Common myeloid progenitor, CD34-positive (primary cell): ENCODE measurements at regions of chr11 and their contacts with region 1.

Region 1: GRCh38 chr11:1694064-1694845 is 2.7 kb upstream of the KRTAP5-6 start:
- DNase-seq: peak; percentile 71 to 82 (median 79)
- H3K4me3 ChIP-seq: peak overlapping the region in 3 of 7 experiments; percentile 57 to 69 (median 63)
- H3K27ac ChIP-seq: no peak overlapping the region
- H3K4me1 ChIP-seq: peaks cover 0 to 27% (median 22%) of the 10 kb centered on the region in 4 experiments
- H3K27me3 ChIP-seq: peaks cover 0 to 3% (median 0%) of the 10 kb centered on the region in 5 experiments

Region 2: DNA sequence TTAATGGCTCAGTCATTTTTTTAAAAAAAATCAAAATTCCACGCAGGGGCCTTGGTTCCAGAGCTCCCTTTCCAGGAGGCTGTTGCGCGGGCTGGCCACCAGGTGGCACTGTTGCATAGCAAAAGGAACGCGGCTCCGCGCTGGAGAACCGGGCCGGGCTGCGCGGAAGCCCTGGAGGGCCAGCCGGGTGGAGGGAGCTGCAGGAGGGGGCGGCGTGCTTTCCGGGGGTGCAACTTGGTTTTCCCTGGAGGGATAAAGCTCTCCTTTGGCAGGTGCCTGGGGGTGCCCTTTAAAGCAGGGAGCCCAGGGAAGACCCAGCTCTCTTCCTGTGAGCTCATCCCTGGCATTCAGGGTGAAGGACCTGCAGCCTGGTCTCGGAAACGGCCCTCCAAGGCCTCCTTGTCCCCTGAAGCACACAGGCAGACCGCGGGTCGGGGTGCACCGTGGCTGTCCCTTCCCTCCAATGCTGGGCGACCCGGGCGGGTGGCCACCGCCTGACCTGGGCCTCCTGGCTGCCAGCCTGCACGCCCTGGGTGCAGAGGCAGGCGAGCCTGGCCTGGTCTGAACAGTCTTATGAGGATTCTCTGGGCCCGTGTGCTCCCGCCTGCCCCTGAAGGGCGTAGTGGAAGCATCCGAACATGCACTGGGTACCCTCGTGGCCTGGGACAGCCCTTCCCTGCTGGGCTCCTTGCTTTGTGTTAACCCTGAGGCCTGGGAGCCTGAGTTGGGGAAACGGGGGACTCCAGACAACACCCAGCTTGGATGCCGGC is 41.3 kb before region 1 on chr11:
- CTCF ChIA-PET with region 1: interaction called, 127 read pairs
- POLR2A ChIA-PET with region 1: interaction called, 4 read pairs
- DNase-seq: peak; percentile 56 to 77 (median 73)
- H3K4me3 ChIP-seq: peak overlapping the region in 1 of 7 experiments; percentile 48
- H3K27ac ChIP-seq: no peak overlapping the region
- H3K4me1 ChIP-seq: peaks cover 2 to 49% (median 41%) of the 10 kb centered on the region in 4 experiments
- H3K27me3 ChIP-seq: peaks cover 0 to 3% (median 0%) of the 10 kb centered on the region in 5 experiments

Region 3: DNA sequence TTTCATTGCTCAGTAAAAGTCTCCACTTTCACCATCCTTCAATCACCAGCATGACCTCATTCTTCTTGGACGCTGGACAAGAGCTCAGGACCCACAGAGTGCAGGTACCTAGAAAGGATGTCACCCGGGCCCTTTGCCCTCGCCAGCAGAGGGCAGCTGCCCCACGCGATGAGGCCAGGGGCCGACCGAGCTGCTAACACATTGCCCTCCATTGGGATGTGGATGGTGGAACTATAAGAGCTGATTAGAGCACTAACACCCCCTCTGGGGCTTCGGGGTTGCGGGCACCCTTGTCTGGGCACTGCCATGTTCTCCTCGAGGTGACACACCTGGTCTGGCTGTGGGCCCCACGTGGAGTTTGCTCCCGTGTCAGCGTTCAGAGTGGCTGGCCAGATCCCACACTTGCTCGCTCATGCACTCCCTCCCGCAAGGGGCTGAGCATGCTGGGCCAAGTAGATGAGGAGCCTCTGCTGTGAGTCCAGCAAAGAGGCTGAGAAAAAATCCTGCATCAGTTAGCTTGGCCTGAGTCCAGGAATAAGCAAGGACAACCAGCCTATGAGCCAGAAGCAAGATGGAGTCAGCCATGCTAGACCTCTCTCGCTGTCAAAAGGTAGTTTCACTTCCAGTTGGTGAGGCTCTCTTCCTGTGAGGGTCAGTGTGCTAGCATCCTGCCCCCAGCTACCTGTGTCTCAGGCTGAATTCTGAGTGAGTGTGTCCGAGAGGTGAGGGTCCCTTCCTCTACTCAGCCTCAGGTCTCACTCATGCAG is 12.6 kb after region 1 on chr11:
- CTCF ChIA-PET with region 1: interaction called, 15 read pairs
- POLR2A ChIA-PET with region 1: no interaction called
- DNase-seq: peak; percentile 31 to 50 (median 44)
- H3K4me3 ChIP-seq: no peak overlapping the region
- H3K27ac ChIP-seq: no peak overlapping the region
- H3K4me1 ChIP-seq: peaks cover 0 to 7% (median 0%) of the 10 kb centered on the region in 4 experiments
- H3K27me3 ChIP-seq: peaks cover 0 to 3% (median 0%) of the 10 kb centered on the region in 5 experiments

Region 4: DNA sequence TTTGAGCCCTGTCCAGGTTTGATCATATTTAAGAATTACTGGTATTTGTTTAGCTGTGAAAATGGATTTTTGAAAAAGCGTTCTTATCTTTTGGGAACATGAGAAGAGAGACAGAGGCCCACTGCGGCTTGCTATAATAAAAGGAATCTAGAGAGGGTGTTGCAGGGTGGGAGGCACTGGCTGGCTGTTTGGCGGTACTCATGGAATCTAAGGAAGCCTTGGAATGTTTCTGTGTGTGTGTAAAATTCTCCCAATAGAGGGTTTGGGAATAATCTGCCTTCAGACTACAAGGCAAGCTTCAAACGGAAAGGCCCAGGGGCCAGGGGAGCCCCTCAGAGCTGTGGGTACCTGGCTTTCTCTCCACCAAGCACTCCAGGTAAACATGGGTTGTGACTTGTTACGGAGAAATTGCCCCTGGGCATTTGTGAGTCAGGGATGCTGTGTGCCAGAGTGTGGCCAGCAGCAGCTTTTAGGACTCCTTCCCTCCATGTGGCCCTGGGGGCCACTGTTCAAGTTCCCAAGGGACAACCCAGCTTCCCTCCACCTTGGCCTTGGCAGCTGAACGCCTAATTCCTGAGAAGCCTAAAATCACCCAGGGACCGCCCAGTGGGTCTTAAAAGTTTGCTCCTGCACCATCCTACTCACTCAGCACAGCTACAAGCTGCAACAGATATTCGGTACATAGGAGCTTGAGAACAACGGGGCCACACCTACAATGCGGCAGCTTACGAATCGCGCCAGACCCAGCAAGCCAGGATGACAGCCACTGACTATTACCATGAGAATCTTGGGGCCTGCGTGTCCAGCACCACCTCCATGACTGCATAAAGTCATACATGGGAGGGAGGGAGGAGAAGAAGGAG is 126.4 kb after region 1 on chr11:
- CTCF ChIA-PET with region 1: interaction called, 20 read pairs
- POLR2A ChIA-PET with region 1: interaction called, 3 read pairs
- DNase-seq: no peak
- H3K4me3 ChIP-seq: no peak overlapping the region
- H3K27ac ChIP-seq: no peak overlapping the region
- H3K4me1 ChIP-seq: peaks cover 0 to 4% (median 0%) of the 10 kb centered on the region in 4 experiments
- H3K27me3 ChIP-seq: peaks cover 0 to 7% (median 3%) of the 10 kb centered on the region in 5 experiments

Region 5: DNA sequence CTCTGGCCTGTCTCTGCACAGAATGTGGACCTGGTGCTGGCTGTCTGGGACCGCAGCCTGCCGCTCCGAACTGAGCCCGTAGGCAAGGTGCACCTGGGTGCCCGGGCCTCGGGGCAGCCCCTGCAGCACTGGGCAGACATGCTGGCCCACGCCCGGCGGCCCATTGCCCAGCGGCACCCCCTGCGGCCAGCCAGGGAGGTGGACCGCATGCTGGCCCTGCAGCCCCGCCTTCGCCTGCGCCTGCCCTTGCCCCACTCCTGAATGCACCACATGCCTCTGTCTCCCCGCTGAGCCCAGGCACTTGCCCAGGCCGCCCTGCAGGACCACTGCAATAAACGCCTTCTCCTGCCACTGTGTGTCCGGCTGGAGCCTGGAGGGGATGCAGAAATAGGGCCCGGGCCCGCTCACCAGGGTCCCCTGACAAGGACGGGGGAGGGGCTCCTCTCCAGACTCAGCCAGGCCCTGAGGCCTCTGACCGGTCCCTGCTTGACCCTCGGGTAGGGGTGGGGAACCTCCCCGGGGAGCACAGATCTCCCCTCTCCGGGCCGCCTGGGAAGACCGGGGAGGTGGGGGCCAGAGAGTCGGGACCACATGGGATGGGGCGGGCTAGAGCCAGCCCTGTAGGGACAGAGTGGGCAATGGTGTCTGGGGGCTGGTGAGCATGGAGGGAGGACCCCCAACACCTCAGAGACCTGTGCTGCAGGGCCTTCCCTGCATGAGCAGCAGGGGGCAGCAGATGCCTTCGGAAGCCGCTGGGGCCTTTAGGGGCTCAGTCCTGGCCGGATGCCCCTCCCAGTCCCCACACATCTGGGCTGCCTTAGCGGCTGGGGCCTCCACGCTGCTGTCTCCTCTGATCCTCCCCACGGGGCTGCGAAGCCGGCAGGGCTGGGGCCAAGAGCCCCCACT is 143.2 kb after region 1 on chr11:
- CTCF ChIA-PET with region 1: interaction called, 213 read pairs
- POLR2A ChIA-PET with region 1: interaction called, 3 read pairs
- DNase-seq: peak; percentile 79 to 90 (median 88)
- H3K4me3 ChIP-seq: no peak overlapping the region
- H3K27ac ChIP-seq: no peak overlapping the region
- H3K4me1 ChIP-seq: peaks cover 0 to 54% (median 38%) of the 10 kb centered on the region in 4 experiments
- H3K27me3 ChIP-seq: peaks cover 0 to 2% (median 0%) of the 10 kb centered on the region in 5 experiments

Region 6: DNA sequence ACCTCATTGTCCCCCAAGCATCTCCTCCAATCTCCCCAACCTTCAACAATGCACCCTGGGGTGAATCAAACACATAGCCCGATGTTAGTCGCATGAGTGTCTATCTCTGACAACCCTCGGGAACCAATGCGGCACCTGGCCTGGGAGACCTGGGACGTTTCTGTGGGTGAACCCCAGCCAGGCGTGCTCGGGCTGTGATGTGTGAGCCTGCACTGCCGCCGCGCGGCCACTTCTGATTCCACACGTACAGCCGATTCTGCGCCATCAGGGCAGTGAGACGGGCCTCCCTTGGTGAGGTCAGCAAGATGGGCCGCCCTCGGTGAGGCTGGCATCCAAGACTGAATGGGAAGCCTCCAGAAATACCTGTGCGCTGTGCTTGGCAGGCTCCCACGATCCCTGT is 308.6 kb after region 1 on chr11:
- CTCF ChIA-PET with region 1: interaction called, 18 read pairs
- POLR2A ChIA-PET with region 1: no interaction called
- DNase-seq: no peak
- H3K4me3 ChIP-seq: no peak overlapping the region
- H3K27ac ChIP-seq: no peak overlapping the region
- H3K4me1 ChIP-seq: no peaks in the 10 kb centered on the region
- H3K27me3 ChIP-seq: no peaks in the 10 kb centered on the region